HEK293T (cell line): ENCODE measurements at regions of chr6 and their contacts with region 1.

Region 1: GRCh38 chr6:34414999-34415858 is 10.6 kb downstream of the RPS10 start:
- DNase-seq: peak; percentile 53

Region 2: DNA sequence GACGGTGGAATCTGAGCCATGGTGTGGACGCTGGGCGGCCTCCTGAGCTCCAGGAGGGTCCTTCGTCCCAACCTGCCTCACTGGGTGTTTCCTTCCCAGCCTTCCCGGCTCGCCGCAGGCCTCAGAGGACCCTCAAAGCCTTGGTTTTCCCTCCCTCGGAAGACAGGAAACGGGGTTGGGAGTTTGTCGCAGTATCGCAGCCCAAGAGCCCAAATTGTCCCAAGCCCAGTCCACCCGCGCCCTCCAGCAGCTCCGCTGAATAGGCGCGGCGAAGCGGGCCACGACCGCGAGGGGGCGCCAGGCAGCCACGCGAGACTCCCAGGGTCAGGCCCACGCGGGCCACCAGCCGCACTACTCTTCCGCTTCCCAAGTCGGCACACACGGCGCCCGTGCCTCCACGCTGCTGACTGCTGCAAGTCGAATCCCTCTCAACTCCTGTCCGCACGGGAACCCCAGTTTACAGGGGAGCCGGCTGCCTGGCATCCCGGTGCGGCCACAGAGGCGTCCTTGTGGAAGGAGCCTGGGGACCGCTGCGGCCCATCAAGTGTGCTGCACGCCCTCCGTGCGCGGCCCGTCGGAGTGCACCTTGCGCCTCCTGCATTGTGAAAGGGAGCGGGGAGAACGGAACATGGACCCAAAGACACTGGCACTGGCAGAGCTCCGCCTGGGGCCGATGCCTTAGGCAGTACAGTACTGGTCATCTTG is 219.0 kb before region 1 on chr6:
- CTCF ChIA-PET with region 1: interaction called, 10 read pairs
- POLR2A ChIA-PET with region 1: interaction called, 8 read pairs
- DNase-seq: peak; percentile 84

Region 3: DNA sequence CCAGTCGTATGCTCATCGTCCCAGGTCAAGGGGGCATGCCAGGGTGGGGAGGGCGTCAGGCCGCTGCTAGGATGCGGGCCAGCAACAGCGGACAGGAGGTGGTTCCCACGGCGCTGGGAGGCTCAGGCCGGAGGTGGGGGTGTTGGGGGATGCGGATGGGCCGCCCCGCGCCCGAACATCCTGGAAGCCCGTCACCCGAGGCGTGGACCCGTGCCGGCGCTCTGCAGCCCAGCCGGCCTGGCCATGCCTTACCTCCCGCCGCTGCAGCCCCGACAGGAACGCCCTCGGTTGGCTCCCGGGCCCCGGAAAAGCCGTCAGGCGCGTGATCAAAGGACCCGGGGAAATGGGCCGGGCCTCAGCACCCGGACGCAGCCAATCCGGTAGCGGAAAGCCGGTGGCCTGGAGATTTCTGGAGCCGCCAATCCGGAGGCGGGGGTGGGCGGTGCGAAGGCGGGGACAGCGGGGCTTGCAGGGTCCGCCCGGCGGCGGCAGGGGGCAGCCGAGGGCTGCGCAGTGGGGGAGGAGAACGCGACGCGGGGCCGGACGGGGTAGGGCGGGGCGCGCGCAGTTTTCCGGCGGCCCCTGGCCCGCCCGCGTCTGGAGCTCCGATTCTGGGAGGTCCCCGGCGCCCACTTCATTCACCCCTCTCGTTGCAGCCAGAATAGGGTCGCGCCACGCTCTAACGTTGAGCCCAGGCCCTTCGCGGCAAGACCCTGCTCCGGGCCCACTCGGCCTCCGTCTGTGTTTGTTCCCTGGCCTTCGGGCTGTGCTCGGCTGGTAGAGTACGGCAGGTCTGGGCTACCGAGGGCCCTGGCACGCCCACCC is 166.3 kb before region 1 on chr6 and contains the start of gene SMIM29:
- CTCF ChIA-PET with region 1: interaction called, 36 read pairs
- POLR2A ChIA-PET with region 1: interaction called, 42 read pairs
- DNase-seq: peak; percentile 95

Region 4: DNA sequence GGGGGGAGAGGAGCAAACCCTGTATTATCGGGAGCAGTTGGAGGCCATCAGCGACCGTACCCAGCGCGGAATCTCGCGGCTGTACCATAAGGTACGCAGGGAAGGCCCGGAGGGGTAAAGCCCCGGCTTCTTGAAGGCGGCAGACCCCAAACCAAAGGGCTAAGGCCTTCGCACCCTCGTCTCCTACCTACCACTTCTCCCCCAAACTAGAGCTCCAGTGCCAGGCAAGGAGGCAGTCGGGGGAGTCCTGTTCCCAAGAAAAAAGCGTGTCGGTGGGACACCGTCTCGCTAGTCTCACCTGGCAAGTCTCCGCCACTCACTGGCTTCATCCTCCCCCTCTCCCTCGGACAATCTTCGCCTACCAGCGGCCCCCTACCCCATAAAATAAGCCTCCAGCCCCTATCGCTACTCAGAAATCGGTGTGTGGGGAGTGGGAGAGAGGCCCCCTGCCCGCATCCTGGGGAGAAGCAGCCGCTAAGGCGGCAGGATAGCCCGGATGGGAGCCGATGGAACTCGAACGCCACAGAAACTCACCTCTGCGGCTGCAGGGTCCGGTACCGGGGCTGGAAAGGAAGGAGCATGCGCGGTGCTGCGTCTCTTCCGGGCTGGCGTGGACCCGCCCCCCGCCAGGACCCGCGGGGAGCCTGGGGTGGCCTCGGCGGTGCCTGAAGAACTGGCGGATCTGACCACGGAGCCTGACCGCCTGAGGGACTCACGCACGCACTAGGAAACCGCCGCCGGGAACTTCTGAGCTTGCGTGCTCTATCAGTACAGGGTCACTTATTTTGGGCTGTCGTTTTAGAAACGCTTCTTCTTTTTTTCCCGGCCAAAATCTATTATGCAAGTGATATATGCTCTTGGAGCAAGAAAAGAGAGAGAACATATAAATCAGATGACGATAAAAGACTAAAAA is 10.5 kb after region 1 on chr6 and contains the start of gene RPS10:
- CTCF ChIA-PET with region 1: interaction called, 6 read pairs
- POLR2A ChIA-PET with region 1: interaction called, 33 read pairs
- DNase-seq: peak; percentile 97

Region 5: DNA sequence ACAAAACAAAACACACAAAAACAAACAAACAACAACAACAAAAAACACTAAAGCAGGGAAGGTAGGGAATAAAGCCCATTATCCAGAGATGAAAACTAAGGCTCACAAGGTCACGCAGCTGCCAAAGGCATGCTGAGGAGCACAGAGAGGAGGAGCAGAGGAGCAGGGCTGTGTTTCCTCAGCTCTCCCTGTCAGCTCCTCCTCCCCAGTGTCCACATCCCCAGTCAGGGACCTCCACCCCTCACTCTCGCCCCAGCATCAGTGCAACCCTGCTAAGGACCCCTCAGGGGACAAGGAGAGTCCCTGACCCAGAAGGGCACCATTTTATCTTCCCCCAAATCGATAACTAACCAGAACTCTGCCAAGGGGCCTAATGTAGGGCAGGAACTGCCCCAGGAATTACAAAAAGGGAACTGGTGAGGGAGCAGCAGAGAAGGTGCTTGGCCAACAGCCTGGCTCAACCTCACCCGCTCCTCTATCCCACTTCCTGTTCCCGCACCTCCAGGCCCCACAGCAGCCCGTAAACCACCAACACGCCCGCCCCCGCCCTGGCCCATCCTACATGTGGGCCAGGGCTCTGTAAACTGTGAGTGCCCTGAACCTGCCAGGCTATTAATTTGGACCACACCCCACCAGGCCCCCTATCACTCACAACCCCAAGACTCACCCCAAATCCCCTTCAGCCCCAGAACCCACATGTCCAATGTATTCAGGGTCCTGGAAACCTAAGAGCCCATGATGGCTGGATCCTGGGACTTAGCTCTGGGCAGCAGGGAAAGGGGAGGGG is 1072.7 kb after region 1 on chr6:
- CTCF ChIA-PET with region 1: interaction called, 11 read pairs
- POLR2A ChIA-PET with region 1: no interaction called
- DNase-seq: no peak